Right cardiac atrium (tissue), 5 donors: ENCODE measurements at regions of chr1 and their contacts with region 1.

Region 1: DNA sequence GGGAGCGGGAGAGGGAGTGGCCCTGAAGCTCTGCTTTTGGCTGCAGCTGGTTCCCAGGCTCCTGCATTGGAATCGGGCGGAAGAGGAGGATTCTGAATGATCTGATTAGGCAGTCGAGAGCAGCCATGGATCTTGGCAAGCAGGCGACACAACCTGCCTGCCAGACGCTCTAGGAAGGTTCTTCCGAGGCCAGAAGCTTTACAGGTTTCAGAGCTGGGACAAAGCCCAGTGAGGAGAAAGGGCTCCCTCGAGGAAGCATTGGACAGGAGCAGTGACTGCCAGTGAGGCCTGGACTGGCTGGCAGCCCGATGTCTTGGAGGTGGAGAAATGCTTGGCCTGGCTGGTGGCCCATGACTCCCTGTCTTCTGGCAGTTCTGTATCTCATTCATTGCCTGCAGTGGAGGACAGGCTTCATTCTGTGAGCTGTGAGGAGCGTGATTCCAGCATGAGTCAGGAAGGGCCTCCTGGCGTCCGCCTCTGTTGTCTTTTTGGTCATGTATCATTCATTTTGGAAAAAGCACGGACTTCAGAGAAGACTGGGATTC is 132.7 kb upstream of the IPO9 start:
- DNase-seq: peak; percentile 92 to 94 (median 93)
- ATAC-seq: peak; percentile 91 to 92
- H3K4me3 ChIP-seq: no peak overlapping the region
- H3K27ac ChIP-seq: peak overlapping the region; percentile 28
- H3K4me1 ChIP-seq: peaks cover 42% of the 10 kb centered on the region
- H3K27me3 ChIP-seq: no peaks in the 10 kb centered on the region

Region 2: DNA sequence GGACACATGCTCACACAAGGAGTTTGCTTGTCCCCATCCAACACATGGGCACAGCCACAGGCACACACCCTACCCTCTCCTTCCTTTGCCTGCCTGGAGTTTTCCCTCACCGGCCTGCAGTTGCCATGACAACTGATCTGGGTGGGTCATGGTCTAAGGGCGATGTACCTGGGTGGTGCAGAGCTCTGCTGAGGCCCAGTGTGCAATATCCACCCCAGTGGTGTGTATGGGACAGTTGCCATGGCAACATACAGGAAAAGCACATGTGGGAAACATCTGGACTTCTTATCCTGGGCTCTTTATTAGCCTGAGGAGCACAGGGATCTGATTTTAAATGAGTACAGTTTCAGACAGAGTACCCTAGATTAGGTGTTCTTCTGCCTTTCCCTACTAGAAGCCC is 58.6 kb before region 1 on chr1:
- intact Hi-C with region 1: loop called in 2 of 4 experiments (anchors 10 kb)
- DNase-seq: peak in 1 of 3 donors; percentile 33
- ATAC-seq: peak in 1 of 2 donors; percentile 35
- H3K4me3 ChIP-seq: no peak overlapping the region
- H3K27ac ChIP-seq: peak overlapping the region; percentile 42
- H3K4me1 ChIP-seq: peaks cover 20% of the 10 kb centered on the region
- H3K27me3 ChIP-seq: no peaks in the 10 kb centered on the region

Region 3: GRCh38 chr1:201649761-201650622 is 46.3 kb before region 1 on chr1:
- intact Hi-C with region 1: loop called in 1 of 4 experiments (anchors 10 kb)
- DNase-seq: peak; percentile 85 to 94 (median 94)
- ATAC-seq: peak; percentile 75 to 80
- H3K4me3 ChIP-seq: peak overlapping the region; percentile 58
- H3K27ac ChIP-seq: no peak overlapping the region
- H3K4me1 ChIP-seq: peaks cover 13% of the 10 kb centered on the region
- H3K27me3 ChIP-seq: no peaks in the 10 kb centered on the region